HepG2 (cell line): ENCODE measurements at regions of chr16 and their contacts with region 1.

Region 1: GRCh38 chr16:59964232-59964924 is 1230.3 kb upstream of the GOT2 start:
- DNase-seq: no peak
- ATAC-seq: no peak
- H3K4me3 ChIP-seq: no peak overlapping the region
- H3K27ac ChIP-seq: no peak overlapping the region
- H3K4me1 ChIP-seq: no peaks in the 10 kb centered on the region
- H3K27me3 ChIP-seq: no peaks in the 10 kb centered on the region
- CTCF ChIP-seq: no peak
- EP300 ChIP-seq: no peak
- POLR2A ChIP-seq: no peak
- RAD21 ChIP-seq: no peak

Region 2: DNA sequence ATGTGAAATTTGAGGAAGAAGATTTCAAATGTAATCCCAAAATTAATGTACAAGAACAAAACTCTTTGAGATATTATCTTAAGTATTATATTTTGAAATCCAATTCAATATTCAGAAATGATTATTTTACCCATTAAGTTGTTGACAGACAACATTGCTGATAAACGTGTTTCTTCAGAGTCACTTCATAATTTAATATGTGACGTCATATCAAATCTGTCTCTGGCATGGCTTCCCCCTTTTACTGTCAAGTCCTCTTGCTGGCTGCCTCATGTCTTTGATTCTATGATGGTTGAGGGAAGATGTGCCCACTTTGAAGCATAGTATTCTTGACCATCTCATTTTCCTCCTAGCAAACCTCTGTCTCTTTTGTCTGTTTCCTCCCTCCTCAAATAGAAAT is 26.8 kb after region 1 on chr16:
- CTCF ChIA-PET with region 1: no interaction called
- POLR2A ChIA-PET with region 1: no interaction called
- in situ Hi-C with region 1: no loop called
- intact Hi-C with region 1: loop called (anchors 1 kb)
- DNase-seq: no peak
- ATAC-seq: no peak
- H3K4me3 ChIP-seq: no peak overlapping the region
- H3K27ac ChIP-seq: no peak overlapping the region
- H3K4me1 ChIP-seq: no peaks in the 10 kb centered on the region
- H3K27me3 ChIP-seq: no peaks in the 10 kb centered on the region
- CTCF ChIP-seq: no peak
- EP300 ChIP-seq: no peak
- POLR2A ChIP-seq: no peak
- RAD21 ChIP-seq: no peak

Region 3: DNA sequence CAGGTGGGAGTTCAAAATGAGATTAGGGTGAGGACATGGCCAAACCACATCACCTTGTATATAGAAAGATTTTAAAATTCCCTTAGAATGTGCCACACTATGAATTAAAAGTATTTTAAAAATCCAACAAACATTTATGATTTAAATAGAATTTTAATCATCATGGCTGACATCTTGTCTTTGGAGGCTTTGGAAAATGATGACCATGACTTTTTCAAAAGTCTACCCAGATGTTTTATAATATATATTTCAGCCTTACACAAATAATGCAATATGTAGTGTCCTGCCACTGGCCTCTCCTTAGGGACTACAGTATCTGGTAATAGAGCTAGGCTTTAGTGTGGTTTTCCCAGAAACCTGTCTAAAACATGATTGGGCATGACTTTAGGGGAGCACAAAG is 123.2 kb after region 1 on chr16:
- CTCF ChIA-PET with region 1: no interaction called
- POLR2A ChIA-PET with region 1: no interaction called
- in situ Hi-C with region 1: no loop called
- intact Hi-C with region 1: no loop called
- DNase-seq: no peak
- ATAC-seq: no peak
- H3K4me3 ChIP-seq: no peak overlapping the region
- H3K27ac ChIP-seq: no peak overlapping the region
- H3K4me1 ChIP-seq: no peaks in the 10 kb centered on the region
- H3K27me3 ChIP-seq: no peaks in the 10 kb centered on the region
- CTCF ChIP-seq: no peak
- EP300 ChIP-seq: no peak
- POLR2A ChIP-seq: no peak
- RAD21 ChIP-seq: no peak

Region 4: GRCh38 chr16:60329108-60329507 is 364.7 kb after region 1 on chr16:
- CTCF ChIA-PET with region 1: no interaction called
- POLR2A ChIA-PET with region 1: no interaction called
- in situ Hi-C with region 1: no loop called
- intact Hi-C with region 1: no loop called
- DNase-seq: no peak
- ATAC-seq: no peak
- H3K4me3 ChIP-seq: no peak overlapping the region
- H3K27ac ChIP-seq: no peak overlapping the region
- H3K4me1 ChIP-seq: no peaks in the 10 kb centered on the region
- H3K27me3 ChIP-seq: no peaks in the 10 kb centered on the region
- CTCF ChIP-seq: no peak
- EP300 ChIP-seq: no peak
- POLR2A ChIP-seq: no peak
- RAD21 ChIP-seq: no peak